Cardiac septum (tissue), 1 donor: ENCODE measurements at regions of chr1 and their contacts with region 1.

Region 1: GRCh38 chr1:203649999-203650855 is 23.6 kb downstream of the ATP2B4 start:
- DNase-seq: no peak

Region 2: GRCh38 chr1:203663294-203663693 is 13.1 kb after region 1 on chr1:
- intact Hi-C with region 1: loop called (anchors 2 kb)
- DNase-seq: no peak

Region 3: GRCh38 chr1:203861379-203862184 is 211.4 kb after region 1 on chr1 and contains the start of gene SNRPE:
- intact Hi-C with region 1: no loop called
- DNase-seq: peak; percentile 98
- total RNA-seq, gene SNRPE: 47.8 TPM